ENCODE measurements at regions of chr12 and their contacts with region 1.

Region 1: GRCh38 chr12:69330475-69331473 is 17.4 kb upstream of the LYZ start:
- DNase-seq: peak; percentile 71
- H3K4me3 Mint-ChIP-seq: peak overlapping the region; percentile 73
- H3K27ac Mint-ChIP-seq: peak overlapping the region; percentile 88
- H3K4me1 Mint-ChIP-seq: peaks cover 53% of the 10 kb centered on the region
- H3K27me3 Mint-ChIP-seq: no peaks in the 10 kb centered on the region

Region 2: DNA sequence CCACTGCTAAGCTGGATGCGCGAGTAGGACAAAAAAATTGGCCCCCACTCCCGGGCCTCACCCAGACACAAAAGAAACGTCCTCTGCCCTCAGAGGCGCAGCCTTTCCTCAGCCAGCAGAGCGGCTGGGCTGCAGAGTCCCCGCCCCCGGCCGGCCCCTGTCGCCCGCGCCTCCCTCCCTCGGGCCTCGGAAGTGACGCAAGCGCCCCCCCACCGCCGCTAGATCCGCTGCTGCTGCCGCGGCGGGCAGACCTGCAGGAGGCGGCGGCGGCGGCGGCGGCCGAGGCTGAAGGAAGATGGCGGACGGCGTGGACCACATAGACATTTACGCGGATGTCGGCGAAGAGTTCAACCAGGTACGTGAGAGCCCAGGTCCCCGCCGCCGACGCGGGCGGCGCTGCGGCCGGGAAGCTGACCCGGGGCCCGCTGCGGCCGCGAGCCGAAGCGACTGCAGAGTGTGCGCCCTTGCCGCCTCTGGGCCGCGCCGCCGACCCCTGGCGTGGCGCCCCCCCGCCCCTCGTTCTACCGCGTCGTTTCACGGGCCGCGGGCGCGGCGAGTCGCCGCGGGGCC is 91.3 kb before region 1 on chr12 and contains the start of gene CPSF6:
- CTCF ChIA-PET with region 1: no interaction called
- POLR2A ChIA-PET with region 1: no interaction called
- intact Hi-C with region 1: loop called (anchors 2 kb)
- DNase-seq: peak; percentile 98
- H3K4me3 Mint-ChIP-seq: peak within 1 kb of the TSS; percentile 96
- H3K27ac Mint-ChIP-seq: peak within 1 kb of the TSS; percentile 99
- H3K4me1 Mint-ChIP-seq: peaks cover 46% of the 10 kb centered on the region
- H3K27me3 Mint-ChIP-seq: no peaks in the 10 kb centered on the region
- total RNA-seq, gene CPSF6: 86.6 to 90.0 TPM

Region 3: GRCh38 chr12:69655377-69656336 is 324.9 kb after region 1 on chr12:
- CTCF ChIA-PET with region 1: no interaction called
- POLR2A ChIA-PET with region 1: no interaction called
- intact Hi-C with region 1: no loop called
- DNase-seq: no peak
- H3K4me3 Mint-ChIP-seq: no peak overlapping the region
- H3K27ac Mint-ChIP-seq: no peak overlapping the region
- H3K4me1 Mint-ChIP-seq: no peaks in the 10 kb centered on the region
- H3K27me3 Mint-ChIP-seq: peaks cover 5% of the 10 kb centered on the region

Measured in activated CD4-positive, alpha-beta memory T cell treated with anti-CD3 and anti-CD28 coated beads for 36 hours (primary cell).